Activated CD4-positive, alpha-beta T cell treated with anti-CD3 and anti-CD28 coated beads for 36 hours (primary cell): ENCODE measurements at regions of chr6 and their contacts with region 1.

Region 1: DNA sequence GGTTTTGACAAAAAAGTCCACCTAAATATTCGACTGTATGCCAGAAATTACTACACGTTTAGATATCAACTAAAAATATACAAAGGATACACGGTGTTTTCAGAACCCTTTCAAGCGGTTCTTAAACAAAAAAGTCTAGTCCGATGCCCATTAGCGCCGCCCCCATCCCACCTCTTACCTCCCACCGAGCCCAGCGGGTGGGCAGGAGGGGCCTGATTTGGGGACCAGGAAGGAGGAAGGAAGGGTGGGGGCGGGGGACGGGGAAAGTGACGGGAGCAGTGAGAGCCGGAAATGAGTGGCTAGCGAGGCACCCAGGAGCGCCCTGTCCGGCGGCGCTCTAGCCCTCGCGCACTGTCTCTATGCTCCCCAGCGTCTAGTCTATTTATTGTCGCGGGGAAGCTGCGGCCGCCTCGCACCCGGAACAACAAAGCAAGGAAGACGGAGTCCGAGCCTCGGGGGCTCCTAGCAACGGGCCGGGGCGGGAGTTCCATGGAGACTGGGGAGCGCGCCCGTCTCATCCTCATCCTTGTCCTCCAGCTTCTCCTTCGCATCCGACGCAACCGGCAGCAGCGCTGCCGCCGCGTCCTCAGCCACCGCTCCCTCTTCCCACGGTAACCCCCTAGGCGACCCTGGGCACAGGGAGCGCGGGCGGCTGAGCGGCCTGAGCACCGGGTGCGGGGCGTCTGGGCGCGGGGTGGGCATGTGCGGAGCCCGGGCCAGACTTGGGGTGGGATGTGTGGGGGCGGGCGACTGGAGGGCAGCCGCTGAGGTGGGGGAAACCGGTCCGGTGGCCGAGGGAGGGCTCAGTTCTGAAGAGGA is at the start of gene TBPL1:
- DNase-seq: peak; percentile 92
- ATAC-seq: peak; percentile 90
- H3K4me3 Mint-ChIP-seq: peak within 1 kb of the TSS; percentile 98
- H3K27ac Mint-ChIP-seq: peak within 1 kb of the TSS; percentile 93
- H3K4me1 Mint-ChIP-seq: peaks cover 38% of the 10 kb centered on the region
- H3K27me3 Mint-ChIP-seq: no peaks in the 10 kb centered on the region
- total RNA-seq, gene TBPL1: 32.2 to 33.9 TPM

Region 2: DNA sequence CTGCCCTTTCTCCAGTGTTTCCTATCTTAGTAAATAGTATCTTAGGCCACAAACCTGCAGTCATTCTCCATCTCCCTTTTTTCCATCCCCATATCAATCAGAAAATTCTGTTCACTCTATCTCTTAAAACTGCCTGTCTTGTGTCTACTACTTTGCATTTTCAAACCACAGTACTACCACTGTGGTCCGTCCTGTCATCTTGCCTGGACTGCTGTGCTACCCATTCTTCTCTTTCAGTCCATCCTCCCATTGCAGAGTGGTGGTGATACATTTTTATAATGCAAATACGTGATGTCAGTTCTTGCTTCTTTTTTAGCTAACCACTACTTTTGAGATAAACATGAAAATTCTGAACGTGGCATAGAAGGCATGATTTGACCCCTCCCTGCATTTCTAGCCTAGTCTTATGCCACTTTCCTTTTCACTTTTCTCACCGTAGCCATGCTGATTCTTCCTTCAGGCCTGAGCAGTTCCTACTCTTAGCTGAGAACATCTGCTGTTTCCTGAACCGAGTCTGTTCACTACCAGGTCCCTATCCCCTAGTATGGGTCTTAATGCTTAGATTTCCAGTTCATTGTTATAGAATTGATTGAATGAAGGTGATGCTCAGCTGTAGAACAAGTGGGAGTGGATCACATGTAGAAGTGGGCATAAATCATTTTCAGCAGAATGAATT is 13.8 kb after region 1 on chr6:
- CTCF ChIA-PET with region 1: interaction called, 11 read pairs
- POLR2A ChIA-PET with region 1: interaction called, 3 read pairs
- intact Hi-C with region 1: loop called in 1 of 2 experiments (anchors 1 kb)
- DNase-seq: no peak
- ATAC-seq: no peak
- H3K4me3 Mint-ChIP-seq: no peak overlapping the region
- H3K27ac Mint-ChIP-seq: no peak overlapping the region
- H3K4me1 Mint-ChIP-seq: peaks cover 59% of the 10 kb centered on the region
- H3K27me3 Mint-ChIP-seq: no peaks in the 10 kb centered on the region

Region 3: GRCh38 chr6:133973109-133973971 is 20.3 kb after region 1 on chr6:
- CTCF ChIA-PET with region 1: interaction called, 30 read pairs
- POLR2A ChIA-PET with region 1: no interaction called
- intact Hi-C with region 1: no loop called
- DNase-seq: no peak
- ATAC-seq: peak; percentile 61
- H3K4me3 Mint-ChIP-seq: no peak overlapping the region
- H3K27ac Mint-ChIP-seq: no peak overlapping the region
- H3K4me1 Mint-ChIP-seq: peaks cover 31% of the 10 kb centered on the region
- H3K27me3 Mint-ChIP-seq: no peaks in the 10 kb centered on the region

Region 4: GRCh38 chr6:134047673-134048072 is 94.6 kb after region 1 on chr6:
- CTCF ChIA-PET with region 1: no interaction called
- POLR2A ChIA-PET with region 1: no interaction called
- intact Hi-C with region 1: loop called in 1 of 2 experiments (anchors 1 kb)
- DNase-seq: no peak
- ATAC-seq: no peak
- H3K4me3 Mint-ChIP-seq: no peak overlapping the region
- H3K27ac Mint-ChIP-seq: no peak overlapping the region
- H3K4me1 Mint-ChIP-seq: peaks cover 9% of the 10 kb centered on the region
- H3K27me3 Mint-ChIP-seq: peaks cover 6% of the 10 kb centered on the region